ENCODE measurements at regions of chr18 and their contacts with region 1.

Region 1: DNA sequence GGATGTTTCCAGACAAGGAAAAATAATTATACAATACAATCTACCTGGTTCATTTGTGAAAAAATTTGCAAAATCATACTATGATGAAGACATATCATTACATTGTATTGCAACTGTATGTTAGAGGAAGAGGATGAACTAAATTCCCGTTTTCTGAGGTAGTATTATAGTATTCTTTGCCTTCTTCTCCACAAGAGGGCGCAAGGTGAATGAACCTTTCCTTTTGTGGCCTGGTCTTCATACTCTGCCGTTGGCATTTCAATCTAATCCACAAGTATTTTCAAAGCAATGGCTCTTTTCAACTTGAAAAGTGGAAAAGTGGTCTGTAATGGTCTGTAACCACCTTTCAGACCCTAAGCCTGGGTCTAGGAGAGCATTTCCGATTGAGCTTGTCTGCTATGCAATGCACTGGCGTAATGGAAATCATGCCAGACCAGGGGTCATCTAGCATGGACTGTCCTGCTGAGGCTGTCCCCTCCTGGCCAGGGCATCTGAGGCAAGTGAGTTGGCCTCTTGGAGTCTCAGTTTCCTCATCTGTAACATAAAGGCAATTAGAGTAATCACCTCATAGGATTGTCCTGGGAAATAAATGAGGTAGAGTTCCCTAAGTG is 30.8 kb upstream of the ZNF396 start:
- DNase-seq: peak; percentile 62
- H3K4me3 Mint-ChIP-seq: no peak overlapping the region
- H3K27ac Mint-ChIP-seq: no peak overlapping the region
- H3K4me1 Mint-ChIP-seq: peaks cover 17% of the 10 kb centered on the region
- H3K27me3 Mint-ChIP-seq: no peaks in the 10 kb centered on the region

Region 2: GRCh38 chr18:35122586-35123224 is 285.3 kb before region 1 on chr18:
- CTCF ChIA-PET with region 1: no interaction called
- intact Hi-C with region 1: no loop called
- DNase-seq: peak; percentile 65
- H3K4me3 Mint-ChIP-seq: peak overlapping the region; percentile 27
- H3K27ac Mint-ChIP-seq: peak overlapping the region; percentile 47
- H3K4me1 Mint-ChIP-seq: peaks cover 36% of the 10 kb centered on the region
- H3K27me3 Mint-ChIP-seq: no peaks in the 10 kb centered on the region

Region 3: DNA sequence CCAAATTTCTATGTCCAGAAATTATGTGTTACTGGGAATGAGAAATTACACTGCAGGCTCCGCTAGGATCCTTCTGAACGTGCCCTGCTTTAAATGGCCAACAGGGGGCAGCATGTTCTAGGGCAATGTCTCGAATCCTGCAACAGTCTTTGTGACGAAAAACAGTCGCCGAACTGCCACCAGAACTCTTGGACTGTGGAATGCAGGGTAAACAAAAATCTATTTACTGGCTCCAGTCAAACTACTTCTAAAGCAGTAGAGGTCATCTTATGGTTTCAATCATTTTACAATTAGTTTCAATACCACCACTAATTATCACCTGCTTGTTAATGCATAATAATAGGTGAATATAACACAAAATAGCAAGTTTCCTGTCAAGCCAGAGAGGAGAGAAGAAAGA is 176.9 kb before region 1 on chr18:
- CTCF ChIA-PET with region 1: interaction called, 5 read pairs
- intact Hi-C with region 1: loop called (anchors 1 kb)
- DNase-seq: peak; percentile 88
- H3K4me3 Mint-ChIP-seq: peak overlapping the region; percentile 56
- H3K27ac Mint-ChIP-seq: no peak overlapping the region
- H3K4me1 Mint-ChIP-seq: peaks cover 3% of the 10 kb centered on the region
- H3K27me3 Mint-ChIP-seq: peaks cover 3% of the 10 kb centered on the region

Region 4: GRCh38 chr18:35422237-35422636 is 14.3 kb after region 1 on chr18:
- CTCF ChIA-PET with region 1: interaction called, 10 read pairs
- intact Hi-C with region 1: no loop called
- DNase-seq: no peak
- H3K4me3 Mint-ChIP-seq: no peak overlapping the region
- H3K27ac Mint-ChIP-seq: no peak overlapping the region
- H3K4me1 Mint-ChIP-seq: no peaks in the 10 kb centered on the region
- H3K27me3 Mint-ChIP-seq: no peaks in the 10 kb centered on the region

Region 5: DNA sequence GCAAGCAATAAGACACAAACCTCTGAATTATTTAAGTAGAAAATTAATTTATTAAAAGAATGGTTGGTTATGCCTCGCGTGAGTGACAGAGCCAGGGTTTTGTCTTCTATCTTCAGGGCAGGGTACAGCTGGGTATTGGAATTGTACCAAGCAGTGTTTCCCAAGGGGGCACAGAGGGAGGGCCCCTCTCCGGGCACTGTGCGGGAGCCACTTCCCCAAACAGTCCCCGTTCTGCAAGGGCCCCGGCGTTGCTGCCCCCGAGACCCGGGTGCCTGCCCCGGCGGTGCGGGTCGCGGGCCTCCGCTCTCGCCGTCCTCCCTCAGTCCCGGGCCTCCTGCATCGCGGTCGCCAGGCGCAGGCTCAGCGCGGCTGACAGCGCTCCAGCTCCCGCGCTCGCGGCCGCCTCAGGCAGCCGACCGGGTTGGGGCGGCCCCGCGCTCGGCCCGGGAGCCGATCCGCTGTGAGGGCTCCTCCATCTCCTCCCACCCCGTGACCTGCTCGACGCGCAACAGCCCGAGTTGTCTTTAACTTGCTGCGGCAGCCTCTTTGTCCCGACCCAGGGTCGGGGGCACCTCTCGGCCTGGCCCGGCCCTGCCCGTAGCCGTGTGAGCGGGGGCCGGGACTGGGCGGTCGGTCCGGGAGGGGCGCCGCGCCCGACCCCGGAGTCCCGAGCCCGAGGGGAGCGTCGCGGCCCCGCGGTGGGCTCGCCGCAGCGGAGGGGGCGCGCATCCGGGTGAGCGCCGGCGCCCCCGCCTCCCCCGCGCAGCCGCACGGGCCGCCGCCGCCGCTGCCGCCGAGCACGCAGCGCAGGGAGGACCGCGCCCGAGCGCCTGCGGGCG is 172.9 kb after region 1 on chr18:
- CTCF ChIA-PET with region 1: interaction called, 3 read pairs
- intact Hi-C with region 1: loop called (anchors 2 kb)
- DNase-seq: peak; percentile 51
- H3K4me3 Mint-ChIP-seq: peak overlapping the region; percentile 74
- H3K27ac Mint-ChIP-seq: peak overlapping the region; percentile 71
- H3K4me1 Mint-ChIP-seq: peaks cover 45% of the 10 kb centered on the region
- H3K27me3 Mint-ChIP-seq: peaks cover 15% of the 10 kb centered on the region

Region 6: DNA sequence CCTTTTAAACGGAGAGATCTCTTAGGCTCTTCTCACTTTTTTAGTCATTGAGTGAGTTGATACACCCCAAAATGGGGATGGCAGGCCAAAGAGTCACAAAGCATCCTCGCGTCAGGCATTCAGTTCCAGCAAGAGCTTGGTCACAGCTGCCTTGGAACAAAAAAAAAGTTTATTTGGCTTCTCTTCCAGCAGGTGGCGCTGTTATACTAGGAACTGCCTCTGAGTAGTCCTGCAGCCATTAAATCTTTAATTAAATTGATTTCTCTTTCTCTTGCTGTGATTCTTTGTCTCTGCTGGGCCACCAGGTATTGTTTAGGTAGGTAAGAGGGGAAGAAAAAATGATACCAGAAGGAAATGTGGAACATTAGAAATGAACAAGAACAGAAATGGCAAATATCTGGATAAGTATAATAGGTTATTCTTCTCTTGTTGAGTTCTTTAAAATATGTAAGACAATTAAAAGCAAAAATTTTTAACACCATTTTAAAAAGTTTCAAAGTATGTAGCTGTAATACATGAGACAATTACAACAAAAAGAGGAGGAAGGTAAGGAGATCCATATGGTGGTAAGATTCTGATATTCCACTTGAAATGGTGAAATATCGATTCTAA is 348.6 kb after region 1 on chr18:
- CTCF ChIA-PET with region 1: no interaction called
- intact Hi-C with region 1: loop called (anchors 5 kb)
- DNase-seq: peak; percentile 78
- H3K4me3 Mint-ChIP-seq: no peak overlapping the region
- H3K27ac Mint-ChIP-seq: no peak overlapping the region
- H3K4me1 Mint-ChIP-seq: no peaks in the 10 kb centered on the region
- H3K27me3 Mint-ChIP-seq: peaks cover 18% of the 10 kb centered on the region

Region 7: GRCh38 chr18:36284671-36285295 is 876.8 kb after region 1 on chr18:
- CTCF ChIA-PET with region 1: no interaction called
- intact Hi-C with region 1: loop called (anchors 5 kb)
- DNase-seq: peak; percentile 55
- H3K4me3 Mint-ChIP-seq: no peak overlapping the region
- H3K27ac Mint-ChIP-seq: no peak overlapping the region
- H3K4me1 Mint-ChIP-seq: no peaks in the 10 kb centered on the region
- H3K27me3 Mint-ChIP-seq: peaks cover 14% of the 10 kb centered on the region